Naive thymus-derived CD4-positive, alpha-beta T cell (primary cell): ENCODE measurements at regions of chrX and their contacts with region 1.

Region 1: GRCh38 chrX:48539345-48540027 is at the start of gene TBC1D25:
- DNase-seq: peak; percentile 85 to 99 (median 95)
- ATAC-seq: peak; percentile 92
- H3K4me3 ChIP-seq: peak within 1 kb of the TSS; percentile 75
- H3K4me3 Mint-ChIP-seq: peak within 1 kb of the TSS; percentile 80 to 98 (median 90)
- H3K27ac ChIP-seq: peak within 1 kb of the TSS; percentile 91
- H3K27ac Mint-ChIP-seq: peak within 1 kb of the TSS; percentile 90 to 99 (median 96)
- H3K4me1 ChIP-seq: peaks cover 8 to 10% of the 10 kb centered on the region in 2 donors
- H3K4me1 Mint-ChIP-seq: peaks cover 14 to 18% (median 16%) of the 10 kb centered on the region in 7 donors
- H3K27me3 ChIP-seq: no peaks in the 10 kb centered on the region
- H3K27me3 Mint-ChIP-seq: no peaks in the 10 kb centered on the region
- total RNA-seq, gene TBC1D25: 20.2 to 31.2 (median 26.4) TPM

Region 2: GRCh38 chrX:47836164-47837072 is 703.1 kb before region 1 on chrX and contains the start of gene ZNF81:
- CTCF ChIA-PET with region 1: no interaction called
- POLR2A ChIA-PET with region 1: no interaction called
- intact Hi-C with region 1: loop called in 1 of 2 experiments (anchors 1 kb)
- DNase-seq: peak; percentile 73 to 91 (median 83)
- ATAC-seq: peak; percentile 96
- H3K4me3 ChIP-seq: peak within 1 kb of the TSS; percentile 67
- H3K4me3 Mint-ChIP-seq: peak within 1 kb of the TSS; percentile 96 to 99 (median 98)
- H3K27ac ChIP-seq: peak within 1 kb of the TSS; percentile 79
- H3K27ac Mint-ChIP-seq: peak within 1 kb of the TSS; percentile 94 to 99 (median 97)
- H3K4me1 ChIP-seq: peaks cover 4 to 6% of the 10 kb centered on the region in 2 donors
- H3K4me1 Mint-ChIP-seq: peaks cover 1 to 36% (median 26%) of the 10 kb centered on the region in 7 donors
- H3K27me3 ChIP-seq: no peaks in the 10 kb centered on the region
- H3K27me3 Mint-ChIP-seq: no peaks in the 10 kb centered on the region
- total RNA-seq, gene ZNF81: 11.0 to 14.7 (median 11.7) TPM

Region 3: GRCh38 chrX:48035891-48036290 is 503.6 kb before region 1 on chrX:
- CTCF ChIA-PET with region 1: no interaction called
- POLR2A ChIA-PET with region 1: no interaction called
- intact Hi-C with region 1: no loop called
- DNase-seq: no peak
- ATAC-seq: no peak
- H3K4me3 ChIP-seq: no peak overlapping the region
- H3K4me3 Mint-ChIP-seq: no peak overlapping the region
- H3K27ac ChIP-seq: no peak overlapping the region
- H3K27ac Mint-ChIP-seq: no peak overlapping the region
- H3K4me1 ChIP-seq: no peaks in the 10 kb centered on the region
- H3K4me1 Mint-ChIP-seq: no peaks in the 10 kb centered on the region
- H3K27me3 ChIP-seq: no peaks in the 10 kb centered on the region
- H3K27me3 Mint-ChIP-seq: no peaks in the 10 kb centered on the region

Region 4: DNA sequence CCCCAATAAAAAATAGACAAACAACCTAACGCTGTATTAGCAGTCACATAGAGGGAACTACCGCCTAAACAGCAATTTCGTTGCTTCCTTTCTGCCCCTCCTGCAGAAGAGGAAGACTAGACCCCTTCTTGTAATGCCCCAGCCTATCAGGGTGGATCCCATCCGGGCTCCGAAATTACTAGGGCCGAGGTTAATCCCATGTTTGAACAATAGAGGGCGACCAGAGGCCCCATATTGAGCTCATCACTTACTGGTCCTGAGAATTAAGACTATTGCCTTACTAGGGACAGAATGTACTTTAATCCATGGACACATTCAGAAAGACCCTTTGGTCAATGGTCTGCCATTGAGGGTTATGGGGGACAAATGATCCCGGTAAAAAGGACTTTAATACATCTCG is 456.3 kb before region 1 on chrX:
- CTCF ChIA-PET with region 1: no interaction called
- POLR2A ChIA-PET with region 1: no interaction called
- intact Hi-C with region 1: loop called in 1 of 2 experiments (anchors 1 kb)
- DNase-seq: peak in 8 of 9 donors; percentile 21 to 59 (median 44)
- ATAC-seq: peak; percentile 78
- H3K4me3 ChIP-seq: no peak overlapping the region
- H3K4me3 Mint-ChIP-seq: no peak overlapping the region
- H3K27ac ChIP-seq: no peak overlapping the region
- H3K27ac Mint-ChIP-seq: no peak overlapping the region
- H3K4me1 ChIP-seq: no peaks in the 10 kb centered on the region
- H3K4me1 Mint-ChIP-seq: peaks cover 0 to 3% (median 0%) of the 10 kb centered on the region in 7 donors
- H3K27me3 ChIP-seq: no peaks in the 10 kb centered on the region
- H3K27me3 Mint-ChIP-seq: no peaks in the 10 kb centered on the region

Region 5: DNA sequence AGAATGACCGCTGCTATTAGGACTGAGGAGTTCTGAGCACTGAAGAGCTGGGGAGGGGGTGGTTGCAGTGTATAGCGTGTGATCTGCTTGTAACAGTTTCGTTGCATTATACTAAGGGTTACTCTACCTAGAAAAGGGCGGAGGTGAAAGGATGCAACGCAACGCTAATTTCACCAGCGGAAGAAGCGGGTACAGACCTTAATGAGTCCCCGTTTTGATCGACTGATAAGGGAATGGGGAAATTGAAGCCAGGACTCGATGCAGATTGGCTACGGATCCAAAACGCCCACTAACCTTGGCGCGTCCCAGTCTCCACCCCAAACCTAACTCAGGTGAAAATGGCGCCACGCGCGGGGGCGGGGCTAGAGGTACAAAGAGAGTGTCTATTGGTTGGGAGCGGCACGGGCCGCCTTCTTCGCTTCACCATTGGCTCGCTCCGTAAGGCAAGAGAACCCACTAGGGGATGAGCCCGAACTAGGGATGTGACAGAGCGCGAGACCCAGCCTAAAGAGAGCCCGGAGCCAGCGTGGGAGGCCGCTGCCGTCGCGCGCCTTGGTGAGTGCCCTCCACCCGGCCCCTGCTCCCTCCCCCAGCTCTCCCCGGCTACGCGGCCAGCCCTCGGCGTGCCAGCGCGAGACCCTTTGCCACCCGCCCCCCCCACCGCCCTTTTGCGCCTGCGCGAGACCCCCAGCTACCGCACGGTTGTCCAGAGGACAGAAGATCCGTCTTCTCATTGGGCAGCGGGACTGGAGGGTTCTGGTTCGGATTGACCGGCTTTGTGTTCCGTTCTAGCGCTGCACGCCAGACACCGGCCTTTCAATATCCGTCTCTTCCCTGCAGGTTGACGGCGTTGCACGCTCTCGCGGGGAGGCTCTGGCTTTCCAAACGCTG is 17.9 kb before region 1 on chrX and contains the start of gene EBP:
- CTCF ChIA-PET with region 1: no interaction called
- POLR2A ChIA-PET with region 1: interaction called, 15 read pairs
- intact Hi-C with region 1: loop called (anchors 1 kb)
- DNase-seq: peak; percentile 82 to 96 (median 94)
- ATAC-seq: peak; percentile 98
- H3K4me3 ChIP-seq: peak within 1 kb of the TSS; percentile 78
- H3K4me3 Mint-ChIP-seq: peak within 1 kb of the TSS; percentile 73 to 93 (median 89)
- H3K27ac ChIP-seq: peak within 1 kb of the TSS; percentile 82
- H3K27ac Mint-ChIP-seq: peak within 1 kb of the TSS; percentile 90 to 99 (median 94)
- H3K4me1 ChIP-seq: peaks cover 12 to 19% of the 10 kb centered on the region in 2 donors
- H3K4me1 Mint-ChIP-seq: peaks cover 14 to 39% (median 34%) of the 10 kb centered on the region in 7 donors
- H3K27me3 ChIP-seq: no peaks in the 10 kb centered on the region
- H3K27me3 Mint-ChIP-seq: no peaks in the 10 kb centered on the region
- total RNA-seq, gene EBP: 33.3 to 188 (median 35.3) TPM

Region 6: DNA sequence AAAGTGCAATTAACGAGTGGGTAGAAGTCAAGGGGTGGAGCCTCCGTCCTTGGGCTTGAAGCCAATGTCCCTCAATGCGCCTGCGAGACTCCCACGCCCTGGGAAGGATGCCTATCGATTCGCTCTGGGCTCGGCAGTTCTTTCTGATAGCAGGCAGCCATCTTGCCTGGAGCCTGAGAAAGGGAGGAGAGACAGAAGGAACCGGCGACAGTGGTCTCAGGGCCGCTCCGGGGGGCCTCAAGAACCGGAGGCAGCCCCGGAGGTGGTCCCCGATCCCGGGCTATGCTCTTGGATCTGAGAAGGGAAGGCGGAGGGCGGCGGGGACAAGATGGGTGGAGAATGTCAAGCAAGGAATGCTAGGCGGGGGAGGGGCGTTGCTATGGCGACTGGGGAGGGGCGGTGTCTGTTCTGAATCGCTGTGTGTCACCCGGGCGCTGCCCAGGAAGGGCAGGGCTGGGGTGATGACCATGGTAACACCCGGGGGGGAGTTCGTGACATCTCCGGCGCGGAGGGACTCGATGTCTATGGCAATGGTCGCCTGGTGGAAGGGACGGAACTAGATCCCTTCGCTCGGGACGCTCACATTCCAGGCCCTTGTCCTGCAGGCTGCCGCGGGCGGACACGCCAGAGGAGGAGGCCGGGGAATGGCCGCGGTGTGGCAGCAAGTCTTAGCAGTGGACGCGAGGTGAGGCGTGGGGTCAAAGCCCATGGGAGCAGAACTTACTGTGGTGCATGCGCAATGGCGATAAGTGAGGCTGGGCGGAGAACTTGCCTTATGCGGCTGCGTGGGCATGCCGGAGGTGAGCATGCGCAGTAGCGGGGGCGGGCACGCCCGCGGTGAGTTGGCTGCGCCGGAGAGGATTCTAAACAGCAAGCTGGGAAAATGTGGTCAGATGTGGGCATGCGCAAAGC is 58.1 kb after region 1 on chrX and contains the start of gene WDR13:
- CTCF ChIA-PET with region 1: interaction called, 3 read pairs
- POLR2A ChIA-PET with region 1: interaction called, 7 read pairs
- intact Hi-C with region 1: loop called (anchors 1 kb)
- DNase-seq: peak; percentile 77 to 93 (median 91)
- ATAC-seq: peak; percentile 93
- H3K4me3 ChIP-seq: peak within 1 kb of the TSS; percentile 98
- H3K4me3 Mint-ChIP-seq: peak within 1 kb of the TSS; percentile 81 to 99 (median 96)
- H3K27ac ChIP-seq: peak within 1 kb of the TSS; percentile 94
- H3K27ac Mint-ChIP-seq: peak within 1 kb of the TSS; percentile 98 to 100 (median 99)
- H3K4me1 ChIP-seq: peaks cover 0 to 8% of the 10 kb centered on the region in 2 donors
- H3K4me1 Mint-ChIP-seq: peaks cover 4 to 16% (median 11%) of the 10 kb centered on the region in 7 donors
- H3K27me3 ChIP-seq: no peaks in the 10 kb centered on the region
- H3K27me3 Mint-ChIP-seq: peaks cover 0 to 2% (median 0%) of the 10 kb centered on the region in 5 donors
- total RNA-seq, gene WDR13: 44.8 to 66.9 (median 54.4) TPM